ENCODE measurements at regions of chr9 and their contacts with region 1.

Region 1: GRCh38 chr9:109316207-109316640 is 4.6 kb downstream of the EPB41L4B start:
- DNase-seq: peak in 2 of 5 donors; percentile 34 to 93
- H3K4me3 ChIP-seq: no peak overlapping the region
- H3K27ac ChIP-seq: peak overlapping the region in 1 of 2 donors; percentile 63
- H3K4me1 ChIP-seq: peaks cover 1 to 11% (median 8%) of the 10 kb centered on the region in 3 donors
- H3K27me3 ChIP-seq: no peaks in the 10 kb centered on the region
- CTCF ChIP-seq: no peak

Region 2: GRCh38 chr9:109244157-109245132 is 71.8 kb before region 1 on chr9:
- intact Hi-C with region 1: loop called (anchors 10 kb)
- DNase-seq: peak; percentile 76 to 83 (median 82)
- H3K4me3 ChIP-seq: no peak overlapping the region
- H3K27ac ChIP-seq: no peak overlapping the region
- H3K4me1 ChIP-seq: no peaks in the 10 kb centered on the region
- H3K27me3 ChIP-seq: no peaks in the 10 kb centered on the region
- CTCF ChIP-seq: peak; percentile 85

Region 3: GRCh38 chr9:109894921-109895758 is 578.9 kb after region 1 on chr9:
- intact Hi-C with region 1: no loop called
- DNase-seq: no peak
- H3K4me3 ChIP-seq: no peak overlapping the region
- H3K27ac ChIP-seq: no peak overlapping the region
- H3K4me1 ChIP-seq: no peaks in the 10 kb centered on the region
- H3K27me3 ChIP-seq: no peaks in the 10 kb centered on the region
- CTCF ChIP-seq: no peak